Ovary (tissue), 10 donors: ENCODE measurements at regions of chr15 and their contacts with region 1.

Region 1: GRCh38 chr15:84836844-84837243 is 19.7 kb downstream of the ALPK3 start:
- DNase-seq: no peak
- H3K4me3 ChIP-seq: no peak overlapping the region
- H3K27ac ChIP-seq: no peak overlapping the region
- H3K4me1 ChIP-seq: peaks cover 11% of the 10 kb centered on the region
- H3K27me3 ChIP-seq: no peaks in the 10 kb centered on the region
- CTCF ChIP-seq: no peak
- EP300 ChIP-seq: no peak
- POLR2A ChIP-seq: no peak

Region 2: DNA sequence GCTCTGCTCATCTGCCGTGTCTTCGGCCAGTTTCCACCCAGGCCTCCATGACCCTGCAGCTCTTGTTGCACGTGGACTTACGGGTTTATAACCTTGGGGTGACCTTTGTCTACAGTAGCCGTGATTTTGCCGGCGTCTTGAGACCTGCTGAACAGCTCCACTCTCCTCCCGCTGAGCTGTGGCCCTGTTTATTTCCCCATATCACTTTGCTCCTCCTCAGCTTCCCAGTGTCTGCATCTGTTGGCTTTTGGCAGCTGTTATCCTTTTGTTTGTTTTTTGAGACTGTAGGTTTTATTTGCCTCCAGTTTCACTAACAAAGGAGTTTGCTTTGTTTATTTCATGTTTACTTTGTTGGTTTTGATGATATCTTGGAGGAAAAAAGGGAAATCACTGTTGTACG is 18.3 kb after region 1 on chr15:
- intact Hi-C with region 1: loop called in 1 of 4 experiments (anchors 1 kb)
- DNase-seq: no peak
- H3K4me3 ChIP-seq: no peak overlapping the region
- H3K27ac ChIP-seq: no peak overlapping the region
- H3K4me1 ChIP-seq: no peaks in the 10 kb centered on the region
- H3K27me3 ChIP-seq: no peaks in the 10 kb centered on the region
- CTCF ChIP-seq: no peak
- EP300 ChIP-seq: no peak
- POLR2A ChIP-seq: no peak

Region 3: DNA sequence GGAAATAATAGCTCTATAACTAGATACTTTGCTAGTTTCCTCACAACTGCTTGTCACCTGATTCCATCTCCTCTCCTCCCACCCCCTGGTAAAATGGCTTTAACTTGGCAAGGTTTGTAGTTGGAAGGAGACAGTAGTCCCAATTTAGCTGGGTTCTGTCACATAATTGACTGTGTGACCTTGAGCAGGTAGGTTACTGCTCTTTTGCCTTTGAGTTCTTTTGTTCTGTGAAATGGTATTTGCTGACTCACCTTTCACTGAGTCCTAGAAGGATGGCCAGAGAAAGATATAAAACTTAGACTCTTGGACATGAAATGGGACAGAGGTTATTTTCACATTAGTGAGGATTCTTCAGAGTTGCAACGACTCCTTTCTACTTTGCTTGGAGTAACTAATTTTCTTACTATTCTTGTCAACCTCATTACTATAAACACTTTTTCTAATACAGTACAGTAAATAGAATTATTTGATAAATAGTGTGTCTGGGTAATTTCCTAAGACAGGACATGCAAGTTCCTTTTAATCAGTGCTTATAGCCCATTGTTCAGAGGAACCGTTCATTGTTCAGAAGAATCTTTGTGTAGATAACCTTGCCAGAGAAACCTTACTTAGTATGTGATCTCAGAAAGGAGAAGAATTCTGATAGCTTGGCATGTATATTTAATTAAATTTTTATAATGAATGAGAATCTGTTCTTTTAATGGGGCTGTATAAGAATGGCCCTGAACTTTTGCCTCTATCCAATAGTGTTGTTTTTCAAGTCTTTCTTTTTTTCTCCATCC is 557.9 kb after region 1 on chr15:
- intact Hi-C with region 1: no loop called
- DNase-seq: no peak
- H3K4me3 ChIP-seq: no peak overlapping the region
- H3K27ac ChIP-seq: no peak overlapping the region
- H3K4me1 ChIP-seq: peaks cover 4% of the 10 kb centered on the region
- H3K27me3 ChIP-seq: no peaks in the 10 kb centered on the region
- CTCF ChIP-seq: no peak
- EP300 ChIP-seq: no peak
- POLR2A ChIP-seq: no peak